Cardiac septum (tissue), 1 donor: ENCODE measurements at regions of chr2 and their contacts with region 1.

Region 1: GRCh38 chr2:187453078-187453641 is 5.1 kb upstream of the CALCRL start:
- DNase-seq: no peak

Region 2: DNA sequence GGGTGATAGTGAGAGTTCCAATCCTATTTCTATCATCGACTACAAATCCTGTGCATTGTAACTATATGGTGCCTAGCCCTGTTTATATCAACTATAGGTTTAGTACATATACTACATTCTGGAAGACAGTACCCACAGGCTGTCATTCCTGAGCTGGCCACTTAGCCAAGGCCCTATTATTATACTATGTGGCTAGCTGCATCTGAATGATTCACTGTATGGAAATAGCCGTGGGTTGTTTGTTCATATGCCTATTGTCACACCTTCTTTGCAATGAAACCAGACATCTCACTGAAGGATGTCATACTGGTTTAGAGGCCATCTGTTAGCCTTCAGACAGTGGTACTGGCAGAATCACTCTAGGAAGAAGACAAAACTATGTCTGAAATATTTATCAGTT is 1776.8 kb before region 1 on chr2:
- intact Hi-C with region 1: no loop called
- DNase-seq: no peak

Region 3: DNA sequence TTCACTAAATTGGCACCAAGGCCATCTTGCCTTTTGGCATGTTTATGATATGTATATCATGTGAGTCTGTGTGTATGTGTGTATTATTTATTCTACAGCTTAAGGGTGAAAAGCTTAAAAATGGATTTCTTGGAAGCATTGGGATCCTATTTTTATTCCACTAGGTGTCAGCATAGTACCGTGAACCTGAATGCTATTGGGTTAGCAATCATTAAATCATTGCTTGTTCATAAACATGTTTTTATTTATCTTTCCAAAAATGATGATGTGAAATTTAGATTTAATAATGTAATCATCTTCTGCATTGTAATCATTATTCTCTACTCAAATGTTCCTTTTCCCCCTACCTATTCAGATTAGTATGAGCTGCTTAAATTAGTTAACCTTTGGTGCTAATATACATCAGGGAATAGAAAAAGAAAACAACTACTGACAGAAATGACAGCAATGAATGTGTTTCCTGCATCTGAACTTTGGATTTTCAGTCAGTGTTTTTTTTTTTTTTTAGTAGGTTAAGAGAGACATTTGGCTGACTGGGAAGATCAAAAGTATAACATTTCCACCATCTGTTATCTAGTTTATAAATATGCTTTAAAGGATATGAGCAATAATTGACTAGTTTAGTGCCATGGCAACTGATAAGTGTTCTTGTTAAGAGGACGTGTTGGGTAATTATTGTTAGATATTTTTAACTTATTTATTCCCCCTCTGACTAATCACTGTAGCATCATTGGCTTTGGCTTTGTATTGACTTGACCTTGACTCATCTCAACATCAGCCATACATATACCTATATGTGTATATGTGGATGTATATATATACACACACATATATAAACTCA is 590.1 kb before region 1 on chr2:
- intact Hi-C with region 1: loop called (anchors 2 kb)
- DNase-seq: no peak

Region 4: GRCh38 chr2:186903216-186903615 is 549.9 kb before region 1 on chr2:
- intact Hi-C with region 1: loop called (anchors 5 kb)
- DNase-seq: no peak

Region 5: GRCh38 chr2:187138265-187138664 is 314.9 kb before region 1 on chr2:
- intact Hi-C with region 1: loop called (anchors 2 kb)
- DNase-seq: no peak

Region 6: DNA sequence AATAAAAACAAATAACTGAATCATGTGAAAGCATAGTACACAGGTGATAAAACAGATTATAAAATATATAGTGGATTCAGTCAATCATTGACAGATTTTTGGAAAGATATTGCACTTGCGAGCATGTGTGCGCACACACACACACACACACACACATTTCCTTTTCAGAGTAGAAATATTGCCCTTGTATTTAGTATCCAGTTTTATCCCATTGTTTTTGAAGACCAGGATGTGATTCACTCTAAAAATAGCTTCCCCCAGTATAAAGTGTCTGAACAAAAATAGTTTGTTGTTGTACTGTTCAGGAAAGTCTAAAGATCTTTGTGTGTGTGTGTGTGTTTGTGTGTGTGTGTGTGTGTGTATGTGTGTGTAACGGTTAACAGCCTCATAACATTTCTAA is 150.5 kb before region 1 on chr2:
- intact Hi-C with region 1: loop called (anchors 2 kb)
- DNase-seq: no peak